Activated CD8-positive, alpha-beta T cell treated with anti-CD3 and anti-CD28 coated beads for 36 hours (primary cell): ENCODE measurements at regions of chr4 and their contacts with region 1.

Region 1: GRCh38 chr4:113684534-113685091 is 76.9 kb downstream of the CAMK2D start:
- DNase-seq: peak; percentile 57
- ATAC-seq: peak; percentile 71
- H3K4me3 Mint-ChIP-seq: no peak overlapping the region
- H3K27ac Mint-ChIP-seq: peak overlapping the region; percentile 94
- H3K4me1 Mint-ChIP-seq: peaks cover 66% of the 10 kb centered on the region
- H3K27me3 Mint-ChIP-seq: no peaks in the 10 kb centered on the region
- CTCF ChIP-seq: no peak

Region 2: DNA sequence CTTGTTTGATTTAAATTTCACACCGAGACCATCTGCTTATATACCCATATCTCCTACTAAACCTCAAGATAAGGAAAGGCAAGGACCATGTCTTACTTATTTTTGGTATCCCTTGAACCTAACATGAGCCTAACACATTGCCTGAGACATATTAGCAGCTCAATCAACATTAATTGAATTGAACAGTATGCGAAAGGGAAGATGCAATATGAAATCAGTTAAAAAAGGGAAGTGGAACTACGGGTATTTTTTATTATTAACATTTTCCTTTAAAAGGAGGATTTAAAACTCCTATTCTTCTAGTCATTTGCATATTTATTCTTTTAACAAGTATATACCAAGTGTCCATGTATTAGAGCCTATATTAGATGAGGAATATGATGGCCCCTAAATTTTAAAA is 120.1 kb before region 1 on chr4:
- CTCF ChIA-PET with region 1: no interaction called
- POLR2A ChIA-PET with region 1: no interaction called
- intact Hi-C with region 1: loop called (anchors 5 kb)
- DNase-seq: no peak
- ATAC-seq: no peak
- H3K4me3 Mint-ChIP-seq: no peak overlapping the region
- H3K27ac Mint-ChIP-seq: peak overlapping the region; percentile 0
- H3K4me1 Mint-ChIP-seq: peaks cover 45% of the 10 kb centered on the region
- H3K27me3 Mint-ChIP-seq: no peaks in the 10 kb centered on the region
- CTCF ChIP-seq: no peak

Region 3: GRCh38 chr4:113738251-113738650 is 53.6 kb after region 1 on chr4:
- CTCF ChIA-PET with region 1: no interaction called
- POLR2A ChIA-PET with region 1: no interaction called
- intact Hi-C with region 1: no loop called
- DNase-seq: no peak
- ATAC-seq: no peak
- H3K4me3 Mint-ChIP-seq: no peak overlapping the region
- H3K27ac Mint-ChIP-seq: no peak overlapping the region
- H3K4me1 Mint-ChIP-seq: peaks cover 62% of the 10 kb centered on the region
- H3K27me3 Mint-ChIP-seq: no peaks in the 10 kb centered on the region
- CTCF ChIP-seq: no peak

Region 4: GRCh38 chr4:113756005-113756410 is 71.4 kb after region 1 on chr4:
- CTCF ChIA-PET with region 1: no interaction called
- POLR2A ChIA-PET with region 1: interaction called, 12 read pairs
- intact Hi-C with region 1: loop called (anchors 1 kb)
- DNase-seq: no peak
- ATAC-seq: peak; percentile 72
- H3K4me3 Mint-ChIP-seq: peak overlapping the region; percentile 40
- H3K27ac Mint-ChIP-seq: peak overlapping the region; percentile 83
- H3K4me1 Mint-ChIP-seq: peaks cover 49% of the 10 kb centered on the region
- H3K27me3 Mint-ChIP-seq: no peaks in the 10 kb centered on the region
- CTCF ChIP-seq: no peak